ENCODE measurements at regions of chr7 and their contacts with region 1.

Region 1: DNA sequence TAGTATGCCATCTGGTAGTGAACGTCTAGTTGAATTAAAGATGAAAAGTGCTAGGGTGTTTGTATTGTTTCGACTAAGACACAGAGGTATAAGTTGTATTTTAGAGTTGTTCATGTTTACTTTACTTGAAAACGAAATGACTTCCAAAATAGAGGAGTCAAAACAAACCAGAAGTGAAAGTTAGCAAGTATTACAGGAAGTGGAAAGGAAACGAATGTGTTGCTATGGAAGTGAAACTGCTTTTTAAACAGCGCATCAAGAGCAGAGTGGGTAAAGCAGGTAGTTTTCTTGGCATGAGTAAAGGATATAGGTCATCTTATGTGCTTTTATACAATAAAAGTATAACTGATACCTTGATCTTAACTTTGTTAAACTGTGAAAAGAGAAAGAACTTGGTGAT is 20.0 kb upstream of the GALNTL5 start:
- DNase-seq: no peak
- H3K4me3 Mint-ChIP-seq: peak overlapping the region; percentile 45
- H3K27ac Mint-ChIP-seq: peak overlapping the region; percentile 73
- H3K4me1 Mint-ChIP-seq: peaks cover 30% of the 10 kb centered on the region
- H3K27me3 Mint-ChIP-seq: no peaks in the 10 kb centered on the region

Region 2: DNA sequence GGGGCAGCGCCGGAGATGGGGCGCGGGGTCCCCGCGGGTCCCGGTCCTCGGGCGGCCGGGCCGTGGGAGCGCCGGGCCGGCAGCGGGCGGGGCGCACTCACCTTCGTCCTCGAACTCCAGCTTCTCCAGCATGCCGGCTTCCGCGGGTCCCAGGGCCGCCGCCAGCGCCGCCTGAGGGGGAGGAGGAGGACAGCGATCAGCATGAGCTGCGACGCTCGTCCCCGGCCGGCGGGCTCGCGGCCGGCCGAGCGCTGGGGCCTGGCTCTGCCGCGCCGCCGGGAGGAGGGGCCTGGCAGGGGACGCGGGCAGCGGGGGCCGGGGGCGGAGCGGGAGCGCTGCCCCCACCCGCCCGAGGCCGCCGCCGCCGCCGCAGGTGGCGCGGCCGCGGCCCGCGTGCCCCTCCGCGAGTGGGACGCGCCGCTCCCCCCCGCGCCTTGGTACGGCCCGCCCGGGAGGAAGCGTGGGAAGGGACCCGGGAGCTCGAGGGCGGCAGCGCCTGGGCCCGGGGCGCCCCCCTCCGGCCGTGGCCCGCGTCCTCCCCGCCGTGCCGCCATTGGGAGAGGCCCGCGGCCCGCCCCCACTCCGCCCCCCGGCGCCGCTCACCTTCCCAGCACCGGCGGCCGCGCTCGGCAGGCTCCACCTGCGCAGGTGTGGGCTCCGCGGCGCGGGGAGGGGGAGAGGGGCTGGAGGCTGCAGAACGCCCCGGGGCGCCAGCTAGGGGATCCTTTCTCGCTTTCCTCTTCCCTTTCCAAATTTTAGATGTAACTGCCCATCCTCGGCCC is 304.0 kb before region 1 on chr7:
- CTCF ChIA-PET with region 1: no interaction called
- intact Hi-C with region 1: loop called (anchors 2 kb)
- DNase-seq: peak; percentile 87
- H3K4me3 Mint-ChIP-seq: peak overlapping the region; percentile 95
- H3K27ac Mint-ChIP-seq: peak overlapping the region; percentile 99
- H3K4me1 Mint-ChIP-seq: peaks cover 23% of the 10 kb centered on the region
- H3K27me3 Mint-ChIP-seq: no peaks in the 10 kb centered on the region

Region 3: DNA sequence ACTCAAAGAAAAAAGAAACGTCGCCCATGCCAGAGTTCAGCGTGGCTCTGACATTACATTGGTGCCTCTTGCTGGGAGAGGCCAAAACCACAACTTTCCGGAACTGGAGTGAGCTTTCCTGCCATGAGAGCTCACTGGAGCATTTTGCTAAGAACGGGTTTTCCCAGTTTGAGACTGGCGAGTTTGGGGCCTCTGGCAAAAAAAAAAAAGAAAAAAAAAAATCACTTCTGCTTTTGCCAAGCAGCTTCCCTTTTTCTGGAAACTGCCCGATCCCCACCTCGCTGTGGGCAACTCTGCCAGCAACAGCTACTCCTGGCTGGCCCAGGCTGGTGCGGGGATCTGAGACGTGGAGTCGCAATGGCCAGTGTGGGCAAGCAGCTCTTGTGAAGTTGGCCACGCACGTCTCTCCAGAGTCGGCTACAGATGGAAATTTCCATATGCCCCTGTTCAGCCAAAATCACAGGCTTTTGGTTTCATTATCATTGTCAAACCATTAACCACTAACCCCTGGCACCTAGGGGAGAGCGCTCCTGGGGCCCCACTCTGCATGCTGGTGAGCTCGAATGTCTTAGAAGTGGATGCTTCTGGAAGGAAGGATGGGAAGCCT is 85.0 kb before region 1 on chr7:
- CTCF ChIA-PET with region 1: no interaction called
- intact Hi-C with region 1: loop called (anchors 1 kb)
- DNase-seq: peak; percentile 62
- H3K4me3 Mint-ChIP-seq: peak overlapping the region; percentile 56
- H3K27ac Mint-ChIP-seq: peak overlapping the region; percentile 62
- H3K4me1 Mint-ChIP-seq: peaks cover 26% of the 10 kb centered on the region
- H3K27me3 Mint-ChIP-seq: no peaks in the 10 kb centered on the region

Region 4: GRCh38 chr7:151876899-151877777 is 59.1 kb before region 1 on chr7 and contains the start of gene PRKAG2:
- CTCF ChIA-PET with region 1: no interaction called
- intact Hi-C with region 1: loop called (anchors 2 kb)
- DNase-seq: peak; percentile 63
- H3K4me3 Mint-ChIP-seq: peak within 1 kb of the TSS; percentile 96
- H3K27ac Mint-ChIP-seq: peak within 1 kb of the TSS; percentile 81
- H3K4me1 Mint-ChIP-seq: peaks cover 10% of the 10 kb centered on the region
- H3K27me3 Mint-ChIP-seq: no peaks in the 10 kb centered on the region
- total RNA-seq, gene PRKAG2: 16.9 to 18.7 TPM

Region 5: GRCh38 chr7:151948019-151948418 is 11.8 kb after region 1 on chr7:
- CTCF ChIA-PET with region 1: no interaction called
- intact Hi-C with region 1: no loop called
- DNase-seq: no peak
- H3K4me3 Mint-ChIP-seq: no peak overlapping the region
- H3K27ac Mint-ChIP-seq: no peak overlapping the region
- H3K4me1 Mint-ChIP-seq: peaks cover 2% of the 10 kb centered on the region
- H3K27me3 Mint-ChIP-seq: no peaks in the 10 kb centered on the region

Region 6: DNA sequence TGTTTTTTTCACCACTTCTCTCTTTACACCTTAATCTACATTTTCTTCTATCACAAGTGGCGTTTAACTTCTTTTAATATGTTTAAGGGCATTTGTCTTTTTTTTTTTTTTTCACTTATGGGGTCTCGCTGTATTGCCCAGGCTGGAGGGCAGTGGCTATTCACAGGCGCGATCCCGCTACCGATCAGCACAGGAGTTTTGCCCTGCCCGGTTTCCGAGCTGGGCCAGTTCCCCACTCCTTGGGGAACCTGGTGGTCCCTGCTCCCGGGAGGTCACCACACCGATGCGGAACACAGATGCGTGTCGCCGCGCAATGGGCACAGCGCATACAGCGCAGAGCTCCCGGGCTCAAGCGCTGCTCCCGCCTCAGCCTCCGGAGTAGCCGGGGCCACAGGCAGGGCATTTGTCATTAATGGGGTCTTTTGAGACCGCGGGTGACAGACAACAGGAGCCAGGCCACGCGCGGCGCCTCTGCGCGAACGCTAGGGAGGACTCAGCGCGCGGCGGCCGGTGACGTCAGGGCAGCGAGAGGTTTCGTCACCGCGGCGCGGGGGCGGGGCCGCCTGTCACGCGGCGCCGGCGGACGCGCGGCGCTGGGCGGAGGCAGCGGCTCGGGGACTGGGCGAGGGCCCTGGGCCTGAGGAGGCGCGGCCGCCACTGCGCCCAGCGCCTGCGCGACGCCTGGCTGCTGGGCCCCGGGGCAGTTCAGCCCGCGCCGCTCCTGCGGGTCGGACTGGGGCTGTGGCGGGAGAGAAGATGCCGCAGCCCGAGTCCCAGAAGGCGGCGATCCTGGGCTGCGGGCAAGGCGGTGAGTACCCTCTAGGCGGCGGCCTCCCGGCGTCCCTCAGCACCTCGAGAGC is 89.1 kb after region 1 on chr7 and contains the start of gene GALNT11:
- CTCF ChIA-PET with region 1: no interaction called
- intact Hi-C with region 1: loop called (anchors 2 kb)
- DNase-seq: peak; percentile 81
- H3K4me3 Mint-ChIP-seq: peak within 1 kb of the TSS; percentile 80
- H3K27ac Mint-ChIP-seq: peak within 1 kb of the TSS; percentile 77
- H3K4me1 Mint-ChIP-seq: peaks cover 30% of the 10 kb centered on the region
- H3K27me3 Mint-ChIP-seq: no peaks in the 10 kb centered on the region
- total RNA-seq, gene GALNT11: 15.6 to 19.8 TPM